Activated naive CD4-positive, alpha-beta T cell treated with anti-CD3 and anti-CD28 coated beads for 36 hours (primary cell): ENCODE measurements at regions of chr10 and their contacts with region 1.

Region 1: GRCh38 chr10:79542626-79543025 is 17.6 kb downstream of the SFTPA2 start:
- DNase-seq: no peak
- H3K4me3 Mint-ChIP-seq: no peak overlapping the region
- H3K27ac Mint-ChIP-seq: no peak overlapping the region
- H3K4me1 Mint-ChIP-seq: peaks cover 6% of the 10 kb centered on the region
- H3K27me3 Mint-ChIP-seq: no peaks in the 10 kb centered on the region

Region 2: GRCh38 chr10:79608505-79609375 is 66.1 kb after region 1 on chr10:
- CTCF ChIA-PET with region 1: interaction called, 18 read pairs
- intact Hi-C with region 1: loop called (anchors 1 kb)
- DNase-seq: peak; percentile 60
- H3K4me3 Mint-ChIP-seq: no peak overlapping the region
- H3K27ac Mint-ChIP-seq: no peak overlapping the region
- H3K4me1 Mint-ChIP-seq: no peaks in the 10 kb centered on the region
- H3K27me3 Mint-ChIP-seq: peaks cover 3% of the 10 kb centered on the region

Region 3: DNA sequence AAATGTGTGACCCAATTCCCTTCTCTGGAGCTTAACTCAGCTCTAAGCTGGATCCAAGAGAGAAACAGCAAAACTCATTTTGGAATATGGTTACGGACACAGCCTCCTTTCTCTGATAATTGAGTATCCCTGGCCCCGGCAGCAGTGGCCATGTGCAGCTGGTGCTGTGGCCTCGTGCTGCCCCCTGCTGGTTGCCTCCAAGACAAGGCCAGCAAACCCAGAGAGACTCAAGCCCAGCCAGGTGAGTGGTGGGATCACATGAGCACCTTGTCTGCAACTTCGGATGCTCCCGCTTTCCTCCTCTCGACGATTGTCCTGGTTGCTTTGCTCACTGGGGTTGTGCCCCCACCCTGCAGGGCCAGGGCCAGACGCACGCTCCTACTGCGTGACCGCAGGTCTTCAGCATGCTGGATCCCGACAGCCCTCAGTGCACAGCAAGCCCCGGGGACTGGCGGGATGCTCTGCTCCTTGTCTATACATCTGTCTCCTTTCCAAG is 386.8 kb after region 1 on chr10:
- CTCF ChIA-PET with region 1: interaction called, 7 read pairs
- intact Hi-C with region 1: loop called (anchors 1 kb)
- DNase-seq: peak; percentile 88
- H3K4me3 Mint-ChIP-seq: no peak overlapping the region
- H3K27ac Mint-ChIP-seq: no peak overlapping the region
- H3K4me1 Mint-ChIP-seq: peaks cover 3% of the 10 kb centered on the region
- H3K27me3 Mint-ChIP-seq: peaks cover 21% of the 10 kb centered on the region